Activated naive CD4-positive, alpha-beta T cell treated with anti-CD3 and anti-CD28 coated beads for 36 hours (primary cell): ENCODE measurements at regions of chr18 and their contacts with region 1.

Region 1: GRCh38 chr18:23503038-23503962 is at the start of gene RMC1:
- DNase-seq: peak; percentile 97
- H3K4me3 Mint-ChIP-seq: peak within 1 kb of the TSS; percentile 92
- H3K27ac Mint-ChIP-seq: peak within 1 kb of the TSS; percentile 88
- H3K4me1 Mint-ChIP-seq: peaks cover 44% of the 10 kb centered on the region
- H3K27me3 Mint-ChIP-seq: no peaks in the 10 kb centered on the region
- total RNA-seq, gene RMC1: 26.2 to 29.7 TPM

Region 2: GRCh38 chr18:23071285-23071684 is 432.0 kb before region 1 on chr18:
- CTCF ChIA-PET with region 1: no interaction called
- intact Hi-C with region 1: loop called (anchors 5 kb)
- DNase-seq: peak; percentile 90
- H3K4me3 Mint-ChIP-seq: peak overlapping the region; percentile 20
- H3K27ac Mint-ChIP-seq: peak overlapping the region; percentile 67
- H3K4me1 Mint-ChIP-seq: peaks cover 56% of the 10 kb centered on the region
- H3K27me3 Mint-ChIP-seq: no peaks in the 10 kb centered on the region

Region 3: DNA sequence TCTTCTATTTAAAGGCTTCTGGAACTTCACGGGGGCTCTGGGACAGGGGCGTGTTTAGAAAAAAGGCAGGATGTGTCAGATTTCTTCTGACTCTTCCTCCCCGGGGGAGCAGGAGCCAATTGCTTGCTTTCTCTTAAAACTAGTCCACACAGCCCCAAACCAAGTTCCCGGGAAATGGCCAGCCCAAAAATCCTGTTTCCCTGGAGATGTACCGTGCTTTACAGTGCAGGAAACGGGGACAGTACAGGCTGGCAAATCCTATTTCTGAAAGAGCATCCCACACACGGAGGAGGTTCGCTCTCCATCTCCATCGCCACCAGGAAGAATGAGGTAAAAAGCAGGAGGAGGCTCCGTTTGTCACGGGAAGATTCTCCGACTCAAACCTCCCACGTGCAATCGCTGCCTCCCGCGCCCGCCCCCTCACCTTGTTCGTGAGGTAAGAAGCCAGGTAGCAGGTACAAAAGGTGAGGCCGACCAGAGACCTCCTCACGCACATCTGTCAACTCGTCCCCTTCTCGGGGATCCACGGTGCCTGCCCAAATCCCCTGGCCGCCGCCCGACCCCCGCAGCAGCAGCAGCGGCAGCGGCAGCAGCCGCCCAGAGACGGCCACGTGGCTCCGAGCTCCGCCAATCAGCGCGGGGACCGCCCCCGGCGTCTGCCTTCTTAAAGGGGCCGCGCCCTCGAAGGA is 65.8 kb before region 1 on chr18:
- CTCF ChIA-PET with region 1: no interaction called
- intact Hi-C with region 1: loop called (anchors 1 kb)
- DNase-seq: peak; percentile 84
- H3K4me3 Mint-ChIP-seq: peak overlapping the region; percentile 89
- H3K27ac Mint-ChIP-seq: no peak overlapping the region
- H3K4me1 Mint-ChIP-seq: peaks cover 21% of the 10 kb centered on the region
- H3K27me3 Mint-ChIP-seq: no peaks in the 10 kb centered on the region

Region 4: GRCh38 chr18:23573626-23574431 is 70.5 kb after region 1 on chr18:
- CTCF ChIA-PET with region 1: no interaction called
- intact Hi-C with region 1: loop called (anchors 1 kb)
- DNase-seq: peak; percentile 64
- H3K4me3 Mint-ChIP-seq: no peak overlapping the region
- H3K27ac Mint-ChIP-seq: peak overlapping the region; percentile 83
- H3K4me1 Mint-ChIP-seq: peaks cover 32% of the 10 kb centered on the region
- H3K27me3 Mint-ChIP-seq: no peaks in the 10 kb centered on the region

Region 5: GRCh38 chr18:23599809-23600208 is 96.5 kb after region 1 on chr18:
- CTCF ChIA-PET with region 1: no interaction called
- intact Hi-C with region 1: no loop called
- DNase-seq: no peak
- H3K4me3 Mint-ChIP-seq: no peak overlapping the region
- H3K27ac Mint-ChIP-seq: no peak overlapping the region
- H3K4me1 Mint-ChIP-seq: no peaks in the 10 kb centered on the region
- H3K27me3 Mint-ChIP-seq: no peaks in the 10 kb centered on the region

Region 6: GRCh38 chr18:23703057-23703986 is 200.0 kb after region 1 on chr18:
- CTCF ChIA-PET with region 1: interaction called, 18 read pairs
- intact Hi-C with region 1: loop called (anchors 2 kb)
- DNase-seq: peak; percentile 26
- H3K4me3 Mint-ChIP-seq: no peak overlapping the region
- H3K27ac Mint-ChIP-seq: no peak overlapping the region
- H3K4me1 Mint-ChIP-seq: no peaks in the 10 kb centered on the region
- H3K27me3 Mint-ChIP-seq: peaks cover 8% of the 10 kb centered on the region

Region 7: DNA sequence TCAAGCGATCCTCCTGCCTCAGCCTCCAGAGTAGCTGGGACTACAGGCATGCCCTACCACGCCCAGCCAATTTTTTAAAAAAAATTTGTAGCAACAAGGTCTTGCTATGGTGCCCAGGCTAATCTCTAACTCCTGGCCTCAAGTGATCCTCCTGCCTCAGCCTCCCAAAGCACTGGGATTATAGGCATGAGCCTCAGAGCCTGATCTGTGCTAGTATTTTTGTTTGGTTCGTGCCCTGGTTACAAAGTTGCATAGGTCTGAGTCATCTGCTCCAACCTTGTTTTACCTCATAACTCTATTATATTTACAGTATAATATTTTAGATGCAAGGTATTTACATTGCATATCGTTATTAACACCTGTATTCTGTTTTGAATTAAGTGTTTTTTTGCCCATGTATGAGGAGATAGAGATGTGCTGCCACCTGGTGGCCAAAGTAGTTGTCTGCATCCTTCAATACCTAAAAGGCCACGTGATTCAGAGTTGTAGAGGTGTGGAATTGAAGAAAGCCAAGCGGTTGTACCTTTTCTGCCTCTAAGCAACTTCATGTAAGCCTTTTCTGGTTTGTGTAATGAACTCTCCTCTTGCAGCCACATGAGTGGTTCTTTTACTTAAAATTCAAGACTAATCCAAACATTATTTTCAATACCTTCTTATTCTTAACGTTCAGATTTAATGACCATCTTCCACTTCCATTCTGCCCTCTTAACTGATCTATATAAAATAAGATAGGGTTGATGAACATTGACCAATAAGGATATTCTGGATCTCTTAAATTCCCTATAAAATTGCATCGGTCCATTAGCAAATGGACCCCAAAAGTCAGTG is 615.7 kb after region 1 on chr18:
- CTCF ChIA-PET with region 1: no interaction called
- intact Hi-C with region 1: loop called (anchors 1 kb)
- DNase-seq: peak; percentile 91
- H3K4me3 Mint-ChIP-seq: no peak overlapping the region
- H3K27ac Mint-ChIP-seq: peak overlapping the region; percentile 38
- H3K4me1 Mint-ChIP-seq: peaks cover 15% of the 10 kb centered on the region
- H3K27me3 Mint-ChIP-seq: no peaks in the 10 kb centered on the region

Region 8: DNA sequence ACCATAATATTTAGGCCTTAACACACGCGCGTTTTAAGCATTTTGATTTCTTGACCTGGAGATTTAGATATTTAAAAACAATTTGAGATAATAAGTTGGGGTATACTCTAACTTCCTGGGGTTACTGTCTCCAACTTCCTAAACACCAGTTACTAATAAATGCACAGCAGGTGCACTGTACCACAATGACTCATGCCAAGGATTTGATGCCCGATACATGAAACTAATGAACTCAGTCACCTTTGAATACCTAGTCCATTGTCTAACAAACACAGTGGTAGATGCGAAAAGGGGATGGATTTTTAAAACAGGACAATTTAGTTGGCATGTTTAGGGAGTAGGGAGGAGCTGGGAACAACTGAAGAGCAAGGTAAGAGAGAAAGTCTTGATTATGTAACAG is 656.8 kb after region 1 on chr18:
- CTCF ChIA-PET with region 1: no interaction called
- intact Hi-C with region 1: no loop called
- DNase-seq: no peak
- H3K4me3 Mint-ChIP-seq: no peak overlapping the region
- H3K27ac Mint-ChIP-seq: no peak overlapping the region
- H3K4me1 Mint-ChIP-seq: no peaks in the 10 kb centered on the region
- H3K27me3 Mint-ChIP-seq: no peaks in the 10 kb centered on the region